ENCODE measurements at regions of chr17 and their contacts with region 1.

Region 1: DNA sequence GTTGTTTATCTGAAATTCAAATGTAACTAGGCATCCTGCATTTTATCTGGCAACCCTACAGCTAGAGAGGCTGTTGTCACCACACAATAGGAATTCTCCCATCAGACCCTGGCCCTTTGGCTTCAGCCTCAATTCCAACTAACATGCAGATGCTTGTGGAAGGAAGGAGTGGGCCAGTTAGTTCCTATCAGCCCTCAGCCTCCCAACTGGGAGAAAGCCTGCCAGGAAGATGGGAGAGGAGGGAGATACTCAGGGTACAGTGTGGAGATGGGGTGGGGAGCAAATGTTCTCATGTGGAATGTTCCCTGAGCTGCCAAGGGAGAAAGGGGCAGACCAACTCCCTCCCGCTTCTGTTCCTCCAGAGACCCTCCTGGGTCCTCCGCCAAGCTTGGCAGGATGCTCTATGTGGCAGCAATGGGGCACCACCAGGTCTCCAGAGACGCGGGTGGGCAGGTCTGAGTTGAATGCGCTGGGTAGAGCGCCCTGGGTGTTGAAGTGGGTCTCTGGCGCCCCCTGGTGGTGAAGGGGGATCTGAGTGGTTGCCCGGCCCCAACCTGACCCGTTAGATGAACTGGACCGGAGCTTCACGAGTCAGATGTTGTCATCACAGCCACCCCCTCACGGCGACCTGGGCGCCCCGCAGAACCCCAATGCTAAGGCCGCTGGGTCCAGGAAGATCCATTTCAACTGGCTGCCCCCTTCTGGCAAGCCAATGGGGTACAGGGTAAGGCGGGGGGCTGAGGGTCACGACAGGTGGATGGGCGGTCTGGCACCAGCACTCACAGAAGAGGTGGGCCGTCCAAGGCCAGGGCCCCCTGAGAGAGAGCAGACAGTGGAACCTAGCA is 15.2 kb downstream of the GALK1 start:
- DNase-seq: peak; percentile 59 to 92
- H3K4me3 ChIP-seq: peak overlapping the region in 1 of 2 donors; percentile 2
- H3K27ac ChIP-seq: no peak overlapping the region
- H3K4me1 ChIP-seq: peaks cover 10 to 11% of the 10 kb centered on the region in 2 donors
- H3K27me3 ChIP-seq: no peaks in the 10 kb centered on the region
- CTCF ChIP-seq: peak; percentile 88 to 96 (median 90)

Region 2: GRCh38 chr17:75632863-75633485 is 116.8 kb before region 1 on chr17 and contains the start of gene SMIM5:
- intact Hi-C with region 1: loop called (anchors 1 kb)
- DNase-seq: peak; percentile 75 to 94
- H3K4me3 ChIP-seq: peak within 1 kb of the TSS in 1 of 2 donors; percentile 24
- H3K27ac ChIP-seq: peak within 1 kb of the TSS; percentile 79 to 82
- H3K4me1 ChIP-seq: peaks cover 11 to 19% of the 10 kb centered on the region in 2 donors
- H3K27me3 ChIP-seq: no peaks in the 10 kb centered on the region
- CTCF ChIP-seq: peak; percentile 89 to 93 (median 93)
- total RNA-seq, gene SMIM5: not detected

Region 3: GRCh38 chr17:75679706-75680442 is 69.9 kb before region 1 on chr17:
- intact Hi-C with region 1: loop called (anchors 1 kb)
- DNase-seq: no peak
- H3K4me3 ChIP-seq: no peak overlapping the region
- H3K27ac ChIP-seq: no peak overlapping the region
- H3K4me1 ChIP-seq: no peaks in the 10 kb centered on the region
- H3K27me3 ChIP-seq: no peaks in the 10 kb centered on the region
- CTCF ChIP-seq: no peak

Region 4: DNA sequence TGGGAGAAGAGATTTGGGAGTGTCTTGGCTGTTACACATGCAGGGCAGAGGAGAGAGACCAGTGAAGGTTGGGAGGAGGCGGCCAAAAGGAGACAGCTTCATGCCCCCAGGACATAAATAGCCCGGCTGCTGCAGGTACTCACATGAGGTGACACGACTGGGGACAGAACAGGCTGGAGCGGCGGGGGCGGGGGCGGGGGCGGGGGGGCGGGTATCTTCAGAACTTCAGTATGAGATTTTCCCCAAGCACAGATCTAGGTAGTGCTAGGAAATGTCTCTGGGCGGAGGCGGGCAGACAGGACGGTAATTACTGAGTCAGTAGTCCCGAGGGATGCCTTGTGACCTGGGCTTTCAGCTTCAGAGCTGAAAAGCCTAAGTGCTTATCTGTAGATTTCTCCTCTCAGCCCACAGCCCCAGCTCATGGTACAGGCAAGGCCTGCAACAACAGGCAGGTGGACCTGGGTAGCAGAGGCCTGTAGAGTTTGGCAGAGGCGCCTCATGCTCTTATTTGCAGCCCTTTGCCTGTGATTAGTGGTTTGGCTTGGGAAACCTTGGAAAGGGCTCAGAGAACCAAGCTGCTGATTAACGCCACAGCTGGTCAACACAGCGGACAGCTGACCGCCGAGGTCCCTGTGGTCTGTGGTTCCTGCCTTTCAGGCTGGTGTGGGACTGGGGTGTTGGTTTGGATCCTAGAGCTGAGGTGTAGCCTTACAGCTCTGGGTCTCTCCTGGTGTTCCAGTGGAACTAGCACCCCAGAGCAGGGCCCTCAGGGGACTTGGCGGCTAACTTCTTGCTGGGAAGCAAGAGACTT is 59.3 kb after region 1 on chr17:
- intact Hi-C with region 1: no loop called
- DNase-seq: peak in 1 of 2 donors; percentile 83
- H3K4me3 ChIP-seq: no peak overlapping the region
- H3K27ac ChIP-seq: peak overlapping the region; percentile 58 to 62
- H3K4me1 ChIP-seq: peaks cover 0 to 3% of the 10 kb centered on the region in 2 donors
- H3K27me3 ChIP-seq: no peaks in the 10 kb centered on the region
- CTCF ChIP-seq: no peak

Region 5: DNA sequence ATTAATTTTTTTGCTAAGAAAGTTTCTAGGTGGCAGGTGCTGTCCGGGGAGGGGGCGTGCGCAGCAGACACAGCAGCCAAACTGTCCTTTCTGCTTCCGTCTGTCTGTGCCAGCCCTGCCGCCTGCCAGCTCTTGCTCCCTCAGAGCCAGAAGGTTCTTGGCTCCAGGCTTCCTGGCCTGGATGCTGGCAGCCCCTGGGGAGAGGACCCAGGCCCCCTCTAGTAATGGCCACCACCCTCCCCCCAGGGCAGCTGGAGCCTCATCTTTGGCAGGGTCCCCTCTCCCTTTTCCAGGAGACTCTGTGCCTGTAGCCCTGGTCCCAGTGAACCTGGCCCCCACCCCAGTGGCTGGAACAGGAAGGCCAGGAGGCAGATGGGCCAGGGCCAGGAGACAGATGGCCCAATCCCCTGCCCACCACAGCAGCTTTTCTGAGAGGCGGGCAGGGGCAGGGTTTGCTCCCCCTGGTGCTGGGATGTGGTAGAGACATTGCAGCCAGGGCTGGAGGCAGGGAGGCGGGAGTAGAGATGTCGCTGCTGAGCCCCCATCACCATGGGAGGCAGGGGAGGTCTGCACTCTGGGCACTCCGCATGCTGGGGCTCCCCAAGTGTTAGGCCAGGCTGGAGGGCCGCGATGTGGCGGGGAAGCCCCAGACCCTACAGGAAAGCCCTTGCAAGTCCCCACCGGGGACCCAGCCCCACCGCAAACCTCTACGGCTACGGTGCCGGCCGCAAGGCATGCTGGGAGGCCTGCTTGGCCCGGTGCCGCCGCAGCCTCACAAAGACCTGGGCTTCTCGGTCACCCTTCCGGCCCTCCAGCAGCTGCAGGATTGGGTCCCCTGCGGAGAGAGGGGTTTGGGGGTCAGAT is 77.7 kb after region 1 on chr17:
- intact Hi-C with region 1: loop called (anchors 5 kb)
- DNase-seq: peak in 1 of 2 donors; percentile 80
- H3K4me3 ChIP-seq: peak overlapping the region in 1 of 2 donors; percentile 47
- H3K27ac ChIP-seq: peak overlapping the region; percentile 88
- H3K4me1 ChIP-seq: peaks cover 11 to 13% of the 10 kb centered on the region in 2 donors
- H3K27me3 ChIP-seq: no peaks in the 10 kb centered on the region
- CTCF ChIP-seq: peak; percentile 70

Region 6: DNA sequence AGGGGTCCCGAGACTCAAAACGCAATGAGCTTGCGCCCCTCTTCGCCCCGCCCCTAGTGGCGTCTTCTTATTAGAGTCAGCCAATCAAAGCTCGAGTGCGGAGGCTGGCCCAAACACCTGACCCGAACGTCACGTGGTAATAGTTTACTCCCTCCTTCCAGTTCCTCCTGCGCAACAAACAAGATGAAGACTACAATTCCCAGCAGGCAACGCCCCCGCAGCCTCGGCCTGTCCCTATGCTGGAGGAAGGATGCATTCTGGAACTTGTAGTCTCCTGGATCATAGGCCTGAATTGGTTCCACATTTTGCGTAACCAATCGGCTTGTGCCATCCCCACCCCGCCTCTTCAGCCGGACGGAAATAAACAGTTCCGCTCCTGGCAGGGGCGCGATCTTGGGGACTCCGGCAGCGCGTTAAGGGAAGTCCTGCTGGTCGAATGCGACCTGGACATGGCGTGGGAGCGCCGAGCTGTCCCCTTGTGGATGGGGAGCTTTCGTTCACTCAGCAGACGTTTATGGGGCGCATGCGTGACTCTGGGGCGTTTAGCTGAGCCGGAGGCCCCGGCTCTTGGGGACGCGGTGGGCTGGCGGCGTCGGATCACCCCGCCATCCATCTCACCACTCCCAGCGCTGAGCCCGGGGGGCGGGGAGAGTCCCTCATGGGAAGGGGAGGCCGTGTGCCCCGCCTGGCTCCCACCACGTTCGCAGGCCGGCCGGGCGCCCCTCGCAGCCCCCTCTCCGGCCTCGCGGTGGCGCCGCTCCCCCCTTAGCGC is 105.7 kb after region 1 on chr17 and contains the start of gene WBP2:
- intact Hi-C with region 1: no loop called
- DNase-seq: peak; percentile 99 to 100
- H3K4me3 ChIP-seq: peak within 1 kb of the TSS; percentile 56 to 87
- H3K27ac ChIP-seq: peak within 1 kb of the TSS; percentile 95 to 98
- H3K4me1 ChIP-seq: peaks cover 3 to 17% of the 10 kb centered on the region in 2 donors
- H3K27me3 ChIP-seq: no peaks in the 10 kb centered on the region
- CTCF ChIP-seq: peak; percentile 63 to 84 (median 68)
- total RNA-seq, gene WBP2: 50.7 TPM